CD8-positive, alpha-beta T cell (primary cell): ENCODE measurements at regions of chr1 and their contacts with region 1.

Region 1: GRCh38 chr1:230978491-230979388 is at the starts of genes ARV1 and TTC13:
- DNase-seq: peak; percentile 91 to 98 (median 96)
- ATAC-seq: peak; percentile 89
- H3K4me3 ChIP-seq: peak within 1 kb of the TSS; percentile 78 to 91
- H3K4me3 Mint-ChIP-seq: peak within 1 kb of the TSS; percentile 100
- H3K27ac ChIP-seq: peak within 1 kb of the TSS; percentile 74 to 88
- H3K27ac Mint-ChIP-seq: peak within 1 kb of the TSS; percentile 98
- H3K4me1 ChIP-seq: peaks cover 38% of the 10 kb centered on the region
- H3K4me1 Mint-ChIP-seq: peaks cover 34% of the 10 kb centered on the region
- H3K27me3 ChIP-seq: no peaks in the 10 kb centered on the region
- H3K27me3 Mint-ChIP-seq: no peaks in the 10 kb centered on the region
- CTCF ChIP-seq: peak; percentile 51
- total RNA-seq, gene ARV1: 1.4 to 1.5 TPM
- total RNA-seq, gene TTC13: 15.2 to 19.3 TPM

Region 2: DNA sequence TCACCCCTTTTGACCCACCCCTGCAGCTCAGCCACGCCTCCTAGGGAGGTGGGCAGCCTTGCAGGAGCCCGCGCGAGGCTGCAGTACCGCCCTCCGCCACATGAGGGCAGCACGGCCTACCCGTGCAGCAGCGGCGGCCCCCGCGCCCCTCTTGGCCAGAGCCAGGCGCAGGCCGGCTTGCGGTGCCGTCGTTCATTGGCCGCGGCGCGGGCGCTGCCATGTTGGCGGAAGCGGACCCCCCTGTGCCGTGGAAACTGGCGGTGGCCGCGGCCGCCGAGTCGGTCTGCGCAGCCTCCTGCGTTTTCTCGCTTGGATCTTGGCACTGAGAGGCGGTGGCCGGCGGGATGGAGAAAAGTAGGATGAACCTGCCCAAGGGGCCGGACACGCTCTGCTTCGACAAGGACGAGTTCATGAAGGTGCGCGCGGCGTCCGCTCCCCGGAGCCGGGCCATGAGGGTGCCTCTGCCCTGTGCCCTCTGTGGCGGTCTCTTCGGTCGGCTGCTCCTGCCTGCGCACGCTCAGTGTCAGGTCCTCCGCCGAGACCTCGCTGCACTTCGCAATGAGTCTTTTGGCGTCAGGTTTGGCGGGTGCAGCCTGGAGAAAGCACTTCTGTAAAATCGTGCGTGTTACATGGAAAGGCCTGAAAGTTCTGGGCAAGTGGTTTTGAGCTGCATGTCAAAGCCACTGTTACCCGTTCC is 336.3 kb before region 1 on chr1 and contains the start of gene COG2:
- CTCF ChIA-PET with region 1: no interaction called
- POLR2A ChIA-PET with region 1: no interaction called
- intact Hi-C with region 1: loop called (anchors 1 kb)
- DNase-seq: peak; percentile 92 to 99 (median 96)
- ATAC-seq: peak; percentile 96
- H3K4me3 ChIP-seq: peak within 1 kb of the TSS; percentile 72 to 92
- H3K4me3 Mint-ChIP-seq: peak within 1 kb of the TSS; percentile 99
- H3K27ac ChIP-seq: peak within 1 kb of the TSS; percentile 73 to 82
- H3K27ac Mint-ChIP-seq: peak within 1 kb of the TSS; percentile 96
- H3K4me1 ChIP-seq: peaks cover 36% of the 10 kb centered on the region
- H3K4me1 Mint-ChIP-seq: peaks cover 54% of the 10 kb centered on the region
- H3K27me3 ChIP-seq: peaks cover 0 to 2% of the 10 kb centered on the region in 2 experiments
- H3K27me3 Mint-ChIP-seq: peaks cover 13% of the 10 kb centered on the region
- CTCF ChIP-seq: peak; percentile 100
- total RNA-seq, gene COG2: 20.1 to 25.7 TPM

Region 3: GRCh38 chr1:230867903-230868735 is 110.6 kb before region 1 on chr1 and contains the start of gene C1orf198:
- CTCF ChIA-PET with region 1: no interaction called
- POLR2A ChIA-PET with region 1: no interaction called
- intact Hi-C with region 1: loop called (anchors 1 kb)
- DNase-seq: peak; percentile 53 to 88 (median 72)
- ATAC-seq: peak; percentile 93
- H3K4me3 ChIP-seq: peak within 1 kb of the TSS; percentile 65 to 79
- H3K4me3 Mint-ChIP-seq: peak within 1 kb of the TSS; percentile 89
- H3K27ac ChIP-seq: peak within 1 kb of the TSS in 1 of 2 experiments; percentile 57
- H3K27ac Mint-ChIP-seq: peak within 1 kb of the TSS; percentile 49
- H3K4me1 ChIP-seq: peaks cover 14% of the 10 kb centered on the region
- H3K4me1 Mint-ChIP-seq: peaks cover 21% of the 10 kb centered on the region
- H3K27me3 ChIP-seq: no peaks in the 10 kb centered on the region
- H3K27me3 Mint-ChIP-seq: peaks cover 18% of the 10 kb centered on the region
- CTCF ChIP-seq: no peak
- total RNA-seq, gene C1orf198: 3.2 to 3.8 TPM

Region 4: DNA sequence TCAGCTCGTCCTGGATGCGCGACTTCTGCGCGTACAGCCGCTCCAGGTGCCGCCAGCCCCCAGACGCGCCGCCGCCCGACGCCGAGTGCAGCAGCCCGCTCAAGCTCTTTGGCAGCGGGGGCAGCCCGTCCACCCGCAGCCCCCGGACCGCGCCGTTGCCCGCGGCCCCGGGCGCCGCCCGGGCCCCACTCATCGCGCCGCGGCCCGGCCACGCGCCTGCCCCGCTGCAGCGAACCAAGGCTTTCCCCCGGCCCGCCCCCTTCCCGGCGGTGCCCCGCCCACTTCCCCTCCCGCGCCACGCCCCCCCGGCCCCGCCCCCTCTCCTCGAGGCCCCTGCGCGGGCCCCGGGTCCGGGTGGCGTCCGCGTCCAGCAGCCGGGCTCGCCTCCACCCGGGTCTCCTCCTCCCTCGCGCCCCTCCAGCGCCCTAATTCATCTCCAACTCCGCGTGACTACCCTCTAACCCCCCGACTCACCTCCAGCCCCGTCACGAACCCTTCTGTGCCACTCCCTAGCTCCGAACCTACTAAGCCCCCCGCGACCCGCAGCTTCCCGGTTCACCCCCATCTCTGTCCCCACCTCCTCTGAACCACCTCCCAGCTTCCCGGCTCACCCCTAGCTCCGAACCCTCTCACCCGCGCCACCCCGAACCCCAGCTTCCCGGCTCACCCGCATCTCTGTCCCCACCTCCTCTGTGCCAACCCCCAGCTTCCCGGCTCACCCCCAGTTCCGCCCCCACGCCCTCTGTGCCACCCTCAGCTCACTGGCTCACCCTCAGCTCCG is 61.5 kb after region 1 on chr1 and contains the start of gene FAM89A:
- CTCF ChIA-PET with region 1: interaction called, 3 read pairs
- POLR2A ChIA-PET with region 1: interaction called, 7 read pairs
- intact Hi-C with region 1: loop called (anchors 1 to 2 kb)
- DNase-seq: peak; percentile 44 to 86 (median 71)
- ATAC-seq: peak; percentile 72
- H3K4me3 ChIP-seq: peak within 1 kb of the TSS; percentile 81 to 83
- H3K4me3 Mint-ChIP-seq: peak within 1 kb of the TSS; percentile 83
- H3K27ac ChIP-seq: no peak within 1 kb of the TSS
- H3K27ac Mint-ChIP-seq: peak within 1 kb of the TSS; percentile 27
- H3K4me1 ChIP-seq: peaks cover 22% of the 10 kb centered on the region
- H3K4me1 Mint-ChIP-seq: peaks cover 33% of the 10 kb centered on the region
- H3K27me3 ChIP-seq: no peaks in the 10 kb centered on the region
- H3K27me3 Mint-ChIP-seq: no peaks in the 10 kb centered on the region
- CTCF ChIP-seq: no peak
- total RNA-seq, gene FAM89A: 1.4 to 2.1 TPM

Region 5: DNA sequence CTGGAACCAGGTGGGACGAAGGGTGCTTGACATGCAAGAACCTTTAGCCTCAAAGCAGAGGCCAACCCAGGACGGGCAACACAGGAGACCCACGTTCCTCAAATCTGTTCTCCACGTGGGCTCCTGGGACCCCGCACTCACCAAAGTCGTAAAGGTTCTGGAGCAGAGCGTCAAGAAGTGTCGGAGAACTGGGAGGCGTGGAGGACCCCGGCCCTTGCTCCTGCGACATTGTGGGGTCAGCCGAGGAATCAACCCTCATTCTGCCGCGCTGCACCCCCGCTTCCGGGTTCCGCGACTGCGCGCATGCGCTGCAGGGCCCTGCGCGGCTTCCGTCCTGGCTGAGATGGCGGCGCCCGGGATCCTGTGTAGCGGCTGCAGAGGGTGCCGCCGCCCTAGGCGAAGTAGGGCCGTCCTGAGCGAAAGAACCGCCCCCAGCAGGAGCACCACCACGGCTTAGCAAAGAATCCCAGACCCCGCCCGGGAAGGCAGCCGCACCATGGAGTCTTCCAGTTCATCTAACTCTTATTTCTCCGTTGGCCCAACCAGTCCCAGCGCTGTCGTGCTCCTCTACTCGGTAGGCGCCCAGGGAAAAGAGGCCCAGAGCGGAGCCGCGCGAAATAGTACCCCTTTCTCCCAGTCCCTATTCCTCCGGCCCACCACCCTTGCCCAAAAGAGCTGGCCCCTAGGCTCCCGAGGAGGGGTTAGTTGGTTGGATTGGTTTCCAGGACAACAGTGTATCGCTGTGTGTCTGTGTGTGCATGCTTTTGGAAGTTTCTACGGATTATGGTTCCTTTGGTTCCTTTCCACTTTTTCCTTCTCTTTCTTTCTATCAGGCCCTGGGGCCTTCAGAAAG is 262.4 kb after region 1 on chr1 and contains the start of gene GNPAT:
- CTCF ChIA-PET with region 1: no interaction called
- POLR2A ChIA-PET with region 1: no interaction called
- intact Hi-C with region 1: loop called (anchors 2 kb)
- DNase-seq: peak; percentile 84 to 96 (median 91)
- ATAC-seq: peak; percentile 96
- H3K4me3 ChIP-seq: peak within 1 kb of the TSS; percentile 77
- H3K4me3 Mint-ChIP-seq: peak within 1 kb of the TSS; percentile 88
- H3K27ac ChIP-seq: peak within 1 kb of the TSS; percentile 79 to 80
- H3K27ac Mint-ChIP-seq: peak within 1 kb of the TSS; percentile 91
- H3K4me1 ChIP-seq: peaks cover 35% of the 10 kb centered on the region
- H3K4me1 Mint-ChIP-seq: peaks cover 78% of the 10 kb centered on the region
- H3K27me3 ChIP-seq: no peaks in the 10 kb centered on the region
- H3K27me3 Mint-ChIP-seq: no peaks in the 10 kb centered on the region
- CTCF ChIP-seq: no peak
- total RNA-seq, gene GNPAT: 10.4 to 11.0 TPM

Region 6: GRCh38 chr1:231528172-231529029 is 549.7 kb after region 1 on chr1 and contains the start of gene TSNAX:
- CTCF ChIA-PET with region 1: no interaction called
- POLR2A ChIA-PET with region 1: interaction called, 3 read pairs
- intact Hi-C with region 1: loop called (anchors 1 to 5 kb)
- DNase-seq: peak; percentile 83 to 97 (median 89)
- ATAC-seq: peak; percentile 91
- H3K4me3 ChIP-seq: peak within 1 kb of the TSS; percentile 81 to 94
- H3K4me3 Mint-ChIP-seq: peak within 1 kb of the TSS; percentile 97
- H3K27ac ChIP-seq: peak within 1 kb of the TSS; percentile 93 to 98
- H3K27ac Mint-ChIP-seq: peak within 1 kb of the TSS; percentile 100
- H3K4me1 ChIP-seq: peaks cover 44% of the 10 kb centered on the region
- H3K4me1 Mint-ChIP-seq: peaks cover 46% of the 10 kb centered on the region
- H3K27me3 ChIP-seq: no peaks in the 10 kb centered on the region
- H3K27me3 Mint-ChIP-seq: no peaks in the 10 kb centered on the region
- CTCF ChIP-seq: no peak
- total RNA-seq, gene TSNAX: 19.7 to 21.7 TPM